ENCODE measurements at regions of chr2 and their contacts with region 1.

Region 1: DNA sequence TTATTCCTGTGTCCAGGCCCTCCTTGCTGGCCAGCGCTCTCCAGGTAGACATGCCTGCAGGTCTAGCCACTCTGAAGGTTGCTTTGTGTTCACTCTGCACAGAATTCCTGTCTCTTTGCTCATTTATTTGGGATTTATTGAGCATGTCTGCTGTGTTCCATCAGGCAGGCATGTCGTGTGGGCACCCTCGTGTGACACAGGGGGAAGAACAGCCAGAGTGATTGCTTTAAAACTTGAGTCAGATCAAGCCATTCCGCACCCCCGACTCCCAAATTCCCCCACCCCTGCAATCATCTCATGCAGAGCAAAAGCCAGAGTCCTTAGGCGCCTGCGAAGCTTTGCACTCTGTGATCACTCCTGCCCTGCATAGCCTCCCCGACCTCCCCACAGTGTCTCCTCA is 44.7 kb upstream of the SIX2 start:
- DNase-seq: no peak
- H3K4me3 ChIP-seq: no peak overlapping the region
- H3K27ac ChIP-seq: no peak overlapping the region
- H3K4me1 ChIP-seq: no peaks in the 10 kb centered on the region
- H3K27me3 ChIP-seq: no peaks in the 10 kb centered on the region
- CTCF ChIP-seq: no peak
- POLR2A ChIP-seq: no peak

Region 2: DNA sequence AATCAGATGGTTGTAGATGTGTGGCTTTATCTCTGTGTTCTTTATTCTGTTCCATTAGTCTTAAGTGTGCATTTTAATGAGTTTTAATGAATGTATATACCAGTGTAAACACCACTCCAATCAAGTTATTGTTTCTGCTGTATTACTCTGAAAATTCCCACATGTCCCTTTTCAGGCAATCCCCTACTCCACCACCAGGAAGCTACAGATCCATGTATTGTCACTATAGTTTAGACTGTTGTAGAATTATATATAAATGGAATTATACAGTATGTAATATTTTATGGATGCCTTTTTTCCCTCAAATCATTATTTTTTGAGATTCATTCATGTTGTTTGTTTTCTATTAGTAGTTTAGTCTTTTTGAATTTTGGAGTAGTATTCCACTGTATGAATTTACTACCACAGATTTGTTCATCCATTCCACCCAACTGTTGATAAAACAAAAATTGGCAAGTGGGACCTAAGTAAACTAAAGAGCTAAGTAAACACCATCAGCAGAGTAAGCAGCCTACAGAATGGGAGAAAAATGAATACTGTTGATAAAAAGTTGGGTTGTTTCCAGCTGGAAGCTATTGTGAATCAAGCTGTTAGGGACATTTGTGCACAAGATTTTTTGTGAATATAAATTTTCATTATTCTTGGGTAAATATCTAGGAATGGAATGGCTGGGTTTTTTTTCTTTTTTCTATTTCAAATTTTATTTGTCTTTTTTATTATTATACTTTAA is 430.2 kb before region 1 on chr2:
- intact Hi-C with region 1: no loop called
- DNase-seq: no peak
- H3K4me3 ChIP-seq: no peak overlapping the region
- H3K27ac ChIP-seq: no peak overlapping the region
- H3K4me1 ChIP-seq: no peaks in the 10 kb centered on the region
- H3K27me3 ChIP-seq: no peaks in the 10 kb centered on the region
- CTCF ChIP-seq: no peak
- POLR2A ChIP-seq: no peak

Region 3: GRCh38 chr2:45043174-45043573 is 10.8 kb before region 1 on chr2:
- intact Hi-C with region 1: no loop called
- DNase-seq: no peak
- H3K4me3 ChIP-seq: no peak overlapping the region
- H3K27ac ChIP-seq: no peak overlapping the region
- H3K4me1 ChIP-seq: no peaks in the 10 kb centered on the region
- H3K27me3 ChIP-seq: no peaks in the 10 kb centered on the region
- CTCF ChIP-seq: no peak
- POLR2A ChIP-seq: no peak

Region 4: DNA sequence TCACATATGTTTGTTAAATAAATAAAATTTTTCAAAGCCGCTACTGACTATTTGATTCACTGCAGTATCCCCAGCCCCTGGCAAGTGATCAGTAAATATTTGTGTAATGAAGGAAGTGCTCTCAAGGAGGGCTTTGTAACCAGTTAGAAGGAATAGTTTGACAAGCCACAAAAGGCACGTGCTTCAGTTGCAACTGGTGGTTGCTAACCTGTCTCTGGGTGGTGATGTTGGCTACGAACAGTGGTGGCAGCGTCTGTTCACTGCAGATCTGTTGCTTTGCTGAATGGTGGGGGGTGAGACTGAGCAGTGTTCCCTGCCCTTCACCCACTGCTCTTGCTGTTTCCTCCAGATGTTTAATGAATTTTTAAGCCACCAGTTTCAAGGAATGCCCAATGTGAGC is 29.2 kb after region 1 on chr2:
- intact Hi-C with region 1: no loop called
- DNase-seq: no peak
- H3K4me3 ChIP-seq: no peak overlapping the region
- H3K27ac ChIP-seq: no peak overlapping the region
- H3K4me1 ChIP-seq: no peaks in the 10 kb centered on the region
- H3K27me3 ChIP-seq: no peaks in the 10 kb centered on the region
- CTCF ChIP-seq: no peak
- POLR2A ChIP-seq: no peak

Region 5: DNA sequence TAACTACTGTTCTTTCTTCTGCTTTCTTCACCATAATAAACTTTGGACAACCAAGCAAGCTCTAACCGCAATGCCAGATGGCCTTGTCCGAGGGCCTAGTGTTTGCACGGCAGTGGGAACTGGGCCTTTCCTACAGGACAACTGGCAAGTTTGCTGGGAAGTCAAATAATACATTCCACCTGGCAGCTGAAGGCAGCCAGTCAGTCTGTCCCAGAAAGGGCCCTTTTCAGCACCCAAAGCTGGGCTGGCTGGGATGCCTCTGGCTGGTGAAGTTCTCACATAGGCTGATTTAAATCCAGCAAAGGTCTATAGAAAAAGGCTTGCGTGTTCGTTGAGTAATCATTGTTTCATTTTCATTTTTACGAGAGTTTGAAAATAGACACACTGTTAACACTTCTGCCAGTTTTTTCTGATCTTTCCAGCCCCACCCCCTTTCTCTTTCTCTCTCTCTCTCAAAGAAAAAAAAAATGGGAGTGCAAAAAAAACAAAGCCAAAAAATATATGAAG is 1133.2 kb after region 1 on chr2:
- intact Hi-C with region 1: loop called (anchors 5 kb)
- DNase-seq: no peak
- H3K4me3 ChIP-seq: peak overlapping the region; percentile 0 to 59 (median 20)
- H3K27ac ChIP-seq: peak overlapping the region; percentile 54 to 83
- H3K4me1 ChIP-seq: no peaks in the 10 kb centered on the region
- H3K27me3 ChIP-seq: no peaks in the 10 kb centered on the region
- CTCF ChIP-seq: no peak
- POLR2A ChIP-seq: no peak

Measured in breast epithelium (tissue), 4 donors.